ENCODE measurements at regions of chr6 and their contacts with region 1.

Region 1: GRCh38 chr6:32868257-32868788 is 14.3 kb downstream of the PSMB9 start:
- H3K4me3 Mint-ChIP-seq: no peak overlapping the region
- H3K27ac Mint-ChIP-seq: no peak overlapping the region
- H3K4me1 Mint-ChIP-seq: peaks cover 16% of the 10 kb centered on the region
- H3K27me3 Mint-ChIP-seq: peaks cover 24% of the 10 kb centered on the region

Region 2: DNA sequence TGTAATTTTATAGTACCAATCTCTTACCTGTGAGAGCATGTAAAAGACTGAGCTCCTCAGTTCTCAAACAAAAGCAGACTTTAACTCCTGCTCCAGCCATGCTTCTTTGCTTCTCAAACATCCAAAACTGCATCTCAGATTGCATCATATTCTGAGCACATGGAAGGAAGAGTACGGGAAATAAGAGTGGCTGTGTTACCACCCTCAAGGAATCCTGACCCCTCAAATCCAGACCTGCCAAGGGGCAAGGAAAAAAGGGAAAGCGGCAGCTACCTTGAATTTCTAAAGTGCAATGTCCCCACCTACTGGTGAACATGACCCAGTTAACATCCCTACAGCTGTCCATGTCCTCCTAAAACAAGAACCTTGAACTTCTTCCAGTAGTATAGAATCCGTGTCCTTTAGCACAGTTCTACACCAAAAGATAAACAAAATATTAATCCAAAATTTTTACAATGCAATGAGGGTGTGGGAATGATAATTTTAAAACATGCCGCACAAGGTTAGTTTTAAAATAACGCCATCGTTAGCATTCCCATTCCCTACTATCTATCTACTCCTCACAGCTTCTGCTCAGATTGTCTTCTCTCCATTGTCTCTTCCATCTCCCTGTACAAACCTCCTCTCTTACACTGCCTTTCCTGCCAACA is 167.8 kb before region 1 on chr6:
- intact Hi-C with region 1: loop called (anchors 10 kb)
- H3K4me3 Mint-ChIP-seq: no peak overlapping the region
- H3K27ac Mint-ChIP-seq: peak overlapping the region; percentile 5
- H3K4me1 Mint-ChIP-seq: peaks cover 25% of the 10 kb centered on the region
- H3K27me3 Mint-ChIP-seq: peaks cover 39% of the 10 kb centered on the region

Region 3: GRCh38 chr6:32718879-32719278 is 149.4 kb before region 1 on chr6:
- intact Hi-C with region 1: no loop called
- H3K4me3 Mint-ChIP-seq: no peak overlapping the region
- H3K27ac Mint-ChIP-seq: no peak overlapping the region
- H3K4me1 Mint-ChIP-seq: peaks cover 8% of the 10 kb centered on the region
- H3K27me3 Mint-ChIP-seq: peaks cover 8% of the 10 kb centered on the region

Region 4: GRCh38 chr6:32819729-32820128 is 48.6 kb before region 1 on chr6:
- intact Hi-C with region 1: loop called (anchors 5 kb)
- H3K4me3 Mint-ChIP-seq: no peak overlapping the region
- H3K27ac Mint-ChIP-seq: peak overlapping the region; percentile 48
- H3K4me1 Mint-ChIP-seq: peaks cover 49% of the 10 kb centered on the region
- H3K27me3 Mint-ChIP-seq: no peaks in the 10 kb centered on the region

Region 5: GRCh38 chr6:32838114-32838958 is 30.0 kb before region 1 on chr6 and contains the start of gene TAP2:
- intact Hi-C with region 1: loop called (anchors 1 kb)
- H3K4me3 Mint-ChIP-seq: peak within 1 kb of the TSS; percentile 83
- H3K27ac Mint-ChIP-seq: peak within 1 kb of the TSS; percentile 88
- H3K4me1 Mint-ChIP-seq: peaks cover 57% of the 10 kb centered on the region
- H3K27me3 Mint-ChIP-seq: no peaks in the 10 kb centered on the region

Measured in dendritic cell treated with granulocyte-macrophage colony-stimulating factor and Interleukin-4, amounts not matched to agents 40 ng/mL and 50 ng/mL, for 4 days (primary cell).